Posterior vena cava (tissue), 2 donors: ENCODE measurements at regions of chr19 and their contacts with region 1.

Region 1: DNA sequence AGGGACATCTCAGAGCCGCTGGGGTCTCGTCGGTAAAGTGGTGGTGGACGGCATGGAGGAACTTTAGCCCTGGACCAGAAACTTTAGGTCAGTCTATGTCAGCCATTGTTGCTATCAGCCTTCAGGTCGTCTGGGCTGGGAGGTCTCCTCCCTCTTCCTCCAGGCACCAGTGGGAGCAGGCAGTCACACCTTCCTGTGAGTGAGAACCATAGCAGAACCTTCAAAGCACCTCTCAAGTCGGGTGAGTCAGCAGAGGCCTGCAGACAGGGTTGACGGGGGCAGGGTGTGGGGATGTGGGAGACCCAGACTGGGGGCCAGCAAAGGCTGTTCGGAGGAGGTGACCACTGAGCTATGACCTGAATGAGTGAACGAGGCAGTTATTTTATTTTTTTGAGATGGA is 15.4 kb upstream of the SBNO2 start:
- DNase-seq: no peak

Region 2: DNA sequence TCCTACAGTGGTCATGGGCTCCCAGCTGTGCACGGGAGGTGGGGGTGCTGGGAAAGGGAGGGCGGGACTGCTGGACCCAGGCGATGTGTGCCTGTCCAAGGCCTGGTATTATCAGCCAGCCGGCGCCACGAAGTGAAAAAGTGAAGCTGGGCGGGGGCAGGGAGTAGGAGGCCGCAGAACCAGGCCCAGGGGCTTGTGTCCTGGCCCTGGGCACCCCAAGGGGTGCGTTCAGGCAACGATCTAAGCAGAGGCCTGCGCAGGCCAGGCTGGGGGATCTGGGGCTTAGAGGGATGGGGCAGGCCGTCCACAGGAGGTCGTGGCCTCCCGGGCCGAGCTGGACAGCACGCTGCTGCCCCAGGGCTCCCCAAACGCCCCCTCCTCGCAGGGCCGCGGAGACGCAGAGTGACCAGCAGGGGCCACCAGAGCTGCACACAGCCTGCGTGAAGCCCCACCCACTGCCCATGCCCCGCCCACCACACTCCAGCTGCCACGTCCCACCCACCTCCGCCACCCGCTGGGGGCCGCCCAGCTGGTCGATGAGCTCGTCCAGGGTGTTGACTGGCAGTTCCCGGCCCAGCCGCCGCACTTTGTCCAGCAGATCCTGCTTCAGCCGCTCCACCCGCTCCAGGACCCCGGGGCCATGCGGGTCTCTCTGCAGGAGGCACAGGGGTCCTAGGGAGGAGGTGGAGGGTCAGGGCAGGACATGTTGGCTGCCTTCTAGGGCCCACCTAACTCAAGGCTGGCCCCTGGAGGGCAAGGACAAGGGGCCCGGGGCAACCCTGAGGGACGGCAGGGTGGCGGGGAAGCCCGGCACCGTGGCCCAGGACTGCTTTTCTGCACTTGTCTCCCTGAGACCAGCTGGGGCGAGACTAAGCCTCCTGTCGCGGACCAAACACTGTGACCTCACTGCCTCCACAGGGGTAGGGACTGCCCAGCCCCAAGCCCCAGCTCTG is 76.1 kb before region 1 on chr19:
- intact Hi-C with region 1: loop called (anchors 5 kb)
- DNase-seq: peak; percentile 98

Region 3: DNA sequence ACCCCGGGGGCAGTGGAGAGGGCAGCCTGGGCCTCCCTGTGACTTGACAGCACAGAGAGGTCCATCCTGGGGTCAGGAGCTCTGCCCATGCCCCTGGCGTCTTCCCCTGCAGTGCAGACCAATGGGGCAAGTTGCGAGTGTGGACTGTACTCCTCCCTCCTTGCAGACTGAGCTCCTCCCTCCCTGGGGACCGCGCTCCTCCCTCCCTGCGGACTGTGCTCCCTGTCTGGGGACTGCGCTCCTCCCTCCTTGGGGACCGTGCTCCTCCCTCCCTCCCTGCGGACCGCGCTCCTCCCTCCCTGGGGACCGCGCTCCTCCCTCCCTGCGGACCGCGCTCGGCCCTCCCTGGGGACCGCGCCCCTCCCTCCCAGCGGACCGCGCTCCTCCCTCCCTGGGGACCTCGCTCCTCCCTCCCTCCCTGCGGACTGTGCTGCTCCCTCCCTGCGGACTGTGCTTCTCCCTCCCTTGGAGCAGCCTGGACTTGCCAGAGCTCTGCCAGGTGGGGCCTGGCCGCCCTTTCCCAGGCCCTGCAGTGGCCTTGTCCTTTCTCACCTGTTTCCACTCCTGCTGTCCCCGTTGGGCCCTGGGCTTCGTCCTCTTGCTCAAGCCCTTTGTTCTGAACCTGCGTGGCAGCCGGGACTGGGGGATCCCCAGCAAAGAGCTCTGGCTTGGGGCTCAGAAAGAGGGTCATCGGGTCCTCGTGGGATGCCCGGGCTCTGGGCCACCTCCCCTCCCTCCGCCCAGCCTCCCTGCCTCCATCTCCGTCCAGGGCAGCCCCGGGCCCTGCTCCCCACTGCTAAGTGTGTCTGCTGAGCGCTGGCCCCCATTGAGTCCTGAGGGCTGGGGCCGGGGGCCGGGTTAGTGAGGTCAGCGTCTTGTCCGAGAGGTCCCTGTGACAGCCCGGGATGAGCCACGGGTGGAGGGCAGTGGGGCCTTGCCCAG is 205.1 kb after region 1 on chr19:
- intact Hi-C with region 1: no loop called
- DNase-seq: no peak